ENCODE measurements at regions of chr5 and their contacts with region 1.

Region 1: GRCh38 chr5:135565725-135566421 is 12.9 kb downstream of the CXCL14 start:
- DNase-seq: peak; percentile 64
- H3K27ac ChIP-seq: no peak overlapping the region
- CTCF ChIP-seq: peak; percentile 85

Region 2: DNA sequence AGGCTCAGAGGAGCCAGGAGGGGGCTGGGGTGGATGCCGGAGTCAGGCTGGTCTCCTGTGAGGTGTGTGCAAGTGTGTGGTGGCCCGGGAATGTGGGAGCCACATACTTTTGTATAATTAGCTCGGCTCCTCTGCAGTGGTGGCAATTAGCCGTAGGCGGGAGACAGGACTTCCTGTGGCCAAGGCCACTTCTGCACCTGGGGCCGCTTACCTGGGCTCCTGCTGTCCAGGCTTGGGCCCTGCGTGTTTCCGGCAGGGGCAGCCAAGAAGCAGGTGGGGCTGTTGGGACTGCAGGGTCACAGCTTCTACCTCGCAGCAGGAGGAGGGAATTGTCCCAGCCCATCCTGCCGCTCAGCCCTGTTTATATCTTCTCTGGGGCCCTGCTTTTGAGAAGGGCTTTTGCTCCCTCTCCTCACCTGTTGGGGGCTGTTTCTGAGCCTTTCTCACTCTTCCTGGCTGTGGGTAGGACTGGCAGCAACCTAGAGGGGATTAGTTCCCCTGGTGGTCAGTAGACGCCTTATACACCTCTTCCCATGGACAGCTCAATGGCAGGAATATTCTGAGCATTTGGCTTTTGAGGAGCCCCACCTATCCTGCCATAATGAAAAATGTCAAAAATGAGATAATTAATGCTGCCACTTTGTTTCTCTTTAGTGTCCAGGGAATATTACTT is 386.4 kb before region 1 on chr5:
- CTCF ChIA-PET with region 1: no interaction called
- POLR2A ChIA-PET with region 1: no interaction called
- DNase-seq: no peak
- H3K27ac ChIP-seq: no peak overlapping the region
- CTCF ChIP-seq: no peak

Region 3: GRCh38 chr5:135287551-135287950 is 278.3 kb before region 1 on chr5:
- CTCF ChIA-PET with region 1: no interaction called
- POLR2A ChIA-PET with region 1: no interaction called
- DNase-seq: no peak
- H3K27ac ChIP-seq: no peak overlapping the region
- CTCF ChIP-seq: no peak

Region 4: DNA sequence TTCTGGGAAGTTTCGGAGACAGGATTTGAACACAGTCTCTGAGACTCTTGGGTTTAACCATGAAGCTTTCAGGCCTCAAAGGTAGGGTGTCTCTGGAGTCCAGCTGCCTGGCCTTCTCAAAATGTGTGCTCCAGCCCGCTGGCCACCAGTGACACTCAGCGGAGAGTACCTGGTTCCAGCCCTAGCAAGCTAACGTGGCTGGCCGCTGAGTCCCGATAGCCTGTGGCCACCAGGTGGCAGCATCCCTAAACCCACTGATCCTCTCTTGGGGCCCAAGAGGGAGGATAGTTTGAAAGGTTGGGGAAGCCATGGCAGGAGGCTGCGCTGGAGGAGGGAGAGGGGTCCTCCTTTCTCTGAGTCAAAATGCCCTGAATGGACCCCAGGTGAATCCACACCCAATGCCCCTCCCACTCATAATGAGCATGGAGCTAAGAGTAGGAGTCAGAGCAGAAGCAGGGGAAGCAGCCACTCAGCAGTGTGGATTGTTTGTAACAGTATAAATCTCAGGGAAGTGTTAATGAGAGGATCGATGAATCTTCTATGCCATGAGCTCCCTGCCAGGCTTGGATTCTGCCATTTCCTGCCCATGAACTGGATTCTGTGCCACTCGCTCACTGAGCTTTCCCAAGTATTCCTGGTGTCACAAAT is 108.3 kb before region 1 on chr5:
- CTCF ChIA-PET with region 1: interaction called, 16 read pairs
- POLR2A ChIA-PET with region 1: no interaction called
- DNase-seq: peak; percentile 83
- H3K27ac ChIP-seq: no peak overlapping the region
- CTCF ChIP-seq: peak; percentile 91

Region 5: GRCh38 chr5:135551593-135552447 is 14.1 kb before region 1 on chr5:
- CTCF ChIA-PET with region 1: interaction called, 80 read pairs
- POLR2A ChIA-PET with region 1: no interaction called
- DNase-seq: peak; percentile 84
- H3K27ac ChIP-seq: no peak overlapping the region
- CTCF ChIP-seq: peak; percentile 95

Region 6: GRCh38 chr5:135578685-135579341 is 12.9 kb after region 1 on chr5 and contains the start of gene CXCL14:
- CTCF ChIA-PET with region 1: interaction called, 40 read pairs
- POLR2A ChIA-PET with region 1: no interaction called
- DNase-seq: peak; percentile 89
- H3K27ac ChIP-seq: no peak within 1 kb of the TSS
- CTCF ChIP-seq: no peak

Region 7: DNA sequence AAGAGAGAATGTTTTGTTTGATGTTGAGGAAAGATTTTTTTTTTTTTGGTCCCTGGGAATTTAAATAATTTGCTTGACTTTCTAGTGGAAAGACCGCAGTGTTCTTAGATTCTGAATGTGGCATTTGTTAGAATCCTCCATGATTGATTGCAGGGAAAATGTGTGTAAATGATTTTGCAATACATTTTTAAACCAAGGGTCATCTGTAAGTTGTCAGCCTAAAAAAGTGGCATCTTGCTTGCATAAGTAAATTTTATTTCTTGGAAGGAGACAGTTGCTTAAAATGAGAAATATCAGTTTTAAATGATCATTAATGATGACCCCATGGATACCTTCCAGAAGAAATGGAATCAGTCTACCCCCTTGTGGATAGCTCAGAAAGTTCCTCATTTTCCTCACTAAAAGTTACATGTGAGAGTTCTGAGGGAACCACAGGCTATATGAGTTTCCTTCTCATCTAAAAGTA is 163.5 kb after region 1 on chr5:
- CTCF ChIA-PET with region 1: interaction called, 57 read pairs
- POLR2A ChIA-PET with region 1: interaction called, 5 read pairs
- DNase-seq: peak; percentile 65
- H3K27ac ChIP-seq: no peak overlapping the region
- CTCF ChIP-seq: no peak

Region 8: GRCh38 chr5:135829681-135830383 is 264.0 kb after region 1 on chr5:
- CTCF ChIA-PET with region 1: interaction called, 27 read pairs
- POLR2A ChIA-PET with region 1: no interaction called
- DNase-seq: peak; percentile 82
- H3K27ac ChIP-seq: no peak overlapping the region
- CTCF ChIP-seq: peak; percentile 84

Region 9: DNA sequence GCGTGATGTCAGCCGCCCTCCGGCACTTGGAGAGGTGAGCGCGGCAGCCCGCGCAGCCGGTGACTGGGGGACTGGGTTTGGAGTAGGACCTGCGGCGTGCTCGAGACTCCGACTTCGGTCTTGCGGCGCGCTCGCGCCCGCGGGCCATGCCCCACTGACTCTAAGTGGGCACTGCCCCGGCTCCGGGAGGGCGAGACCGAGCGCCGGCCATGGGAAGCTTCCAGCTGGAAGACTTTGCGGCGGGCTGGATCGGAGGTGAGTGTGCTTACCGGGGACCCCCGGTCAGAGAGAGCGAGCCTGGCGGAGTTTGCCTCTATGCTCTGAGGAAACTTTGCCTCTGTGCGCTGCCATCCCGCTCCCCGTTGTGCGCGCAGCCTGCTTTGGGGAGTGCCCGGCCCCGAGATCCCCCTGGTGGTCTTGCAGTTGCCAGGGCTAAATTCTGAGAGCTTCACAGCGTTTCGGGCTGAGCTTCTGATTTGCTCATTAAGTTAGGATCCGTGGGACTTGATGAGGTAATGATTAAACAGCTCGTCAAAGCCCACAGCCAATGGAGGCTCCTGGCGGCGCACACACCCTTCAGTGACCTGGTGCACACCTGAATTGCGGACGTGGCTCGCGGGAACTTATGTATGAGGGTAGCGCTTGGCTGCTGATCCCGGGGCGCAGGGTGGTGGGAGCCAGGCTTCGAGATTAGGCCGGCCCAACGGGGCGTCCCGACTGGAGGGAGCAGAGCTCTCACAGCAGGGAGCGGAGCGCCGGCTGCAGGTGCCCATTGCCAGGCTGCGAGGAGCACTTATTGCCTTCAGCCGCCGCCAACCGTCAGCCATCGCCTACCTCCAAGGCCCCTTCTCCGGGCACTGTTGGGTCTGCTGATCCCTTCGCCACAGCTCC is 269.0 kb after region 1 on chr5 and contains the start of gene SLC25A48:
- CTCF ChIA-PET with region 1: interaction called, 27 read pairs
- POLR2A ChIA-PET with region 1: no interaction called
- DNase-seq: peak; percentile 84
- H3K27ac ChIP-seq: no peak within 1 kb of the TSS
- CTCF ChIP-seq: peak; percentile 62

Measured in RWPE1 (cell line).